ENCODE measurements at regions of chr12 and their contacts with region 1.

Region 1: GRCh38 chr12:122399592-122400373 is 22.7 kb downstream of the CLIP1 start:
- DNase-seq: peak; percentile 93
- H3K4me3 ChIP-seq: peak overlapping the region; percentile 18
- H3K27ac ChIP-seq: peak overlapping the region; percentile 95
- H3K4me1 ChIP-seq: peaks cover 37% of the 10 kb centered on the region
- H3K27me3 ChIP-seq: no peaks in the 10 kb centered on the region
- CTCF ChIP-seq: peak; percentile 85

Region 2: GRCh38 chr12:122421821-122422729 is 22.3 kb after region 1 on chr12 and contains the start of gene CLIP1:
- CTCF ChIA-PET with region 1: interaction called, 11 read pairs
- POLR2A ChIA-PET with region 1: no interaction called
- intact Hi-C with region 1: loop called (anchors 1 kb)
- DNase-seq: peak; percentile 76
- H3K4me3 ChIP-seq: peak within 1 kb of the TSS; percentile 87
- H3K27ac ChIP-seq: peak within 1 kb of the TSS; percentile 96
- H3K4me1 ChIP-seq: peaks cover 17% of the 10 kb centered on the region
- H3K27me3 ChIP-seq: no peaks in the 10 kb centered on the region
- CTCF ChIP-seq: peak; percentile 56
- total RNA-seq, gene CLIP1: 52.1 and 62.2 TPM in 2 replicates

Region 3: GRCh38 chr12:122471324-122472226 is 71.8 kb after region 1 on chr12:
- CTCF ChIA-PET with region 1: interaction called, 47 read pairs
- POLR2A ChIA-PET with region 1: no interaction called
- intact Hi-C with region 1: loop called (anchors 1 kb)
- DNase-seq: peak; percentile 83
- H3K4me3 ChIP-seq: no peak overlapping the region
- H3K27ac ChIP-seq: peak overlapping the region; percentile 33
- H3K4me1 ChIP-seq: no peaks in the 10 kb centered on the region
- H3K27me3 ChIP-seq: no peaks in the 10 kb centered on the region
- CTCF ChIP-seq: peak; percentile 85